SK-N-SH (cell line): ENCODE measurements at regions of chr11 and their contacts with region 1.

Region 1: GRCh38 chr11:11022125-11022730 is 164.4 kb upstream of the ZBED5 start:
- DNase-seq: peak; percentile 32
- H3K4me3 ChIP-seq: no peak overlapping the region
- H3K27ac ChIP-seq: no peak overlapping the region
- H3K4me1 ChIP-seq: peaks cover 0 to 6% of the 10 kb centered on the region in 2 experiments; a peak in 1 of 4 replicates
- H3K27me3 ChIP-seq: no peaks in the 10 kb centered on the region
- CTCF ChIP-seq: peak; percentile 66
- EP300 ChIP-seq: no peak
- RAD21 ChIP-seq: peak; percentile 67

Region 2: GRCh38 chr11:11010624-11011127 is 11.6 kb before region 1 on chr11:
- CTCF ChIA-PET with region 1: interaction called, 25 read pairs
- POLR2A ChIA-PET with region 1: no interaction called
- DNase-seq: peak; percentile 45
- H3K4me3 ChIP-seq: no peak overlapping the region
- H3K27ac ChIP-seq: no peak overlapping the region
- H3K4me1 ChIP-seq: peaks cover 0 to 10% of the 10 kb centered on the region in 2 experiments; a peak in 2 of 4 replicates
- H3K27me3 ChIP-seq: no peaks in the 10 kb centered on the region
- CTCF ChIP-seq: peak; percentile 32; the same call in 1 of the 2 replicates
- EP300 ChIP-seq: no peak
- RAD21 ChIP-seq: peak; percentile 32; the same call in 1 of the 2 replicates